Activated CD4-positive, alpha-beta memory T cell treated with anti-CD3 and anti-CD28 coated beads for 36 hours (primary cell): ENCODE measurements at regions of chr11 and their contacts with region 1.

Region 1: DNA sequence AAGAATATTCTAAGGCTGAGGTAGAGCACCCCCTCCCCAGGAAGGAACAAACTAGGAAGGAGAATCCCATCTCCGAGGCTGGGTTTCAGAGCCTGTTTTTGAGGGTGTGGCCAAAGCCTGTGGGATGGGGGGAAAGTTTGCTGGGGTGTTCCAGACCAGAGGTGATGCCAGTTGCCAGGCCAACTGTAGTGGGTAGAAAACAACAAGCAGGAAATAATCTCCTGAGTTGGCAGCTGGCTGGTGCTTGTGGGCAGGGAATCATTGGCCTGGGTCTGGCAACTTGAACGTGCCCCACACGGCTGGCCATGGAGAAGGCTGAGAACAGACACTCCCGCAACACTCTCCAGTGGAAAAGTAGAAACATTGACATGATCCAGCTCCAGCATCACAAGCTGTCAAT is 385.6 kb downstream of the ETS1 start:
- DNase-seq: no peak
- H3K4me3 Mint-ChIP-seq: no peak overlapping the region
- H3K27ac Mint-ChIP-seq: no peak overlapping the region
- H3K4me1 Mint-ChIP-seq: peaks cover 11% of the 10 kb centered on the region
- H3K27me3 Mint-ChIP-seq: no peaks in the 10 kb centered on the region

Region 2: DNA sequence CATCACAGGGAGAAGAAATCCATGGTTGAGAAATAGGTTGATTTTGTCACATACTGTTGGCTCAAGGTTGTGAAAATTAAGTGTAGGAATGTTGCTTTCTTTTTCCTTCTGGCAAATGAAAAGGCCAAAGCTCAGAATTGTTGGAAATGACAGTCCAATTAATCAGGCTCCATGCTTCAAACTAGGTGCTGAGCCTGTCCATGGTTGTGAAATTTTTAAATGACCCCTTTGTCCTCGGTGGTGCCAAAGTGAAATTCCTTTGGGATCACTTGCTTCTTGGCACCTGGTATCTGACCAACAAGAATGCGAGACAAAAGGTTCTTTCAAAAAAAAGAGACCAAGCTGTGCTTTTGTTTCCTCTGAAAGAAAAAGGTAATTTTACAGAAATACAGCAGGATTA is 66.3 kb before region 1 on chr11:
- CTCF ChIA-PET with region 1: no interaction called
- POLR2A ChIA-PET with region 1: no interaction called
- intact Hi-C with region 1: no loop called
- DNase-seq: no peak
- H3K4me3 Mint-ChIP-seq: no peak overlapping the region
- H3K27ac Mint-ChIP-seq: no peak overlapping the region
- H3K4me1 Mint-ChIP-seq: peaks cover 12% of the 10 kb centered on the region
- H3K27me3 Mint-ChIP-seq: no peaks in the 10 kb centered on the region

Region 3: GRCh38 chr11:128187835-128188234 is 14.0 kb before region 1 on chr11:
- CTCF ChIA-PET with region 1: no interaction called
- POLR2A ChIA-PET with region 1: no interaction called
- intact Hi-C with region 1: no loop called
- DNase-seq: no peak
- H3K4me3 Mint-ChIP-seq: no peak overlapping the region
- H3K27ac Mint-ChIP-seq: no peak overlapping the region
- H3K4me1 Mint-ChIP-seq: peaks cover 19% of the 10 kb centered on the region
- H3K27me3 Mint-ChIP-seq: no peaks in the 10 kb centered on the region

Region 4: GRCh38 chr11:128238521-128239265 is 36.9 kb after region 1 on chr11:
- CTCF ChIA-PET with region 1: no interaction called
- POLR2A ChIA-PET with region 1: no interaction called
- intact Hi-C with region 1: loop called (anchors 2 kb)
- DNase-seq: no peak
- H3K4me3 Mint-ChIP-seq: peak overlapping the region; percentile 45
- H3K27ac Mint-ChIP-seq: peak overlapping the region; percentile 75
- H3K4me1 Mint-ChIP-seq: peaks cover 27% of the 10 kb centered on the region
- H3K27me3 Mint-ChIP-seq: no peaks in the 10 kb centered on the region